B cell (primary cell): ENCODE measurements at regions of chr2 and their contacts with region 1.

Region 1: DNA sequence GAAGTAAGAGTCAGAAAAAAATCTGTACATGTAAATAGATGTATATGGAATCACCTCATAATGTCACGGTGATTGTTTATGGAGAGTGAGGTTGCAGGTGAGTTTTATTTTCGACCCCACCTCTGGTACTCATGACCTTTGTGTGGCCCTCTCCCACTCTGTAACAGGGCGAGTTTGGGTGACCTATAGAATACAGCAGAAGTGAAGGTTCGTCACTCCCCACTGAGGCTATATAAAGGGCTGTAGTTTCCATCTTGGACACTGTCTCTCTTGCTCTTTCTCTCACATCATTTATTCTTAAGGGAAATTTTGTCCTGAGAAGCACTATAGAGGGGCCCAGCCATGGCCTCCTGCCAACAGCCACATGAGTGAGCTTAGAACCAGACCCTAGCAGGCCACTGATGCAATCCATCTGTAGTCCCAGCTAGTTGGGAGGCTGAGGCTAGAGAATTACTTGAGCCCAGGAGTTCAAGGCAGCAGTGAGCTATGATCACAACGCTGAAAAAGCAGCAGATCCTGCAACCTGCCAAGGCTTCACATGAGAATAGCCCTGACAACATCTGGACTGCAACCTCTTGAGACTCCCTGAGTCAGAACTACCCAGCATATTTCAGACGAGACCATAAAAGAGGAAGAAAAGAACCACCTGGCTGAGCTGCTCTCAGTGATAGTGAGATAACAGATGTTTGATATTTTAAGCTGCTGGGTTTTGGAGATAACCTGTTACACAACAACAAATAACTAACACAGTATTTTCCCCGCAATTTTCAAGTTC is 74.3 kb upstream of the SLC1A4 start:
- DNase-seq: peak; percentile 80
- ATAC-seq: peak; percentile 79
- H3K4me3 ChIP-seq: no peak overlapping the region
- H3K4me3 Mint-ChIP-seq: peak overlapping the region; percentile 62
- H3K27ac ChIP-seq: peak overlapping the region in 1 of 2 donors; percentile 58
- H3K27ac Mint-ChIP-seq: peak overlapping the region; percentile 66
- H3K4me1 ChIP-seq: peaks cover 57 to 68% of the 10 kb centered on the region in 2 donors
- H3K4me1 Mint-ChIP-seq: peaks cover 59% of the 10 kb centered on the region
- H3K27me3 ChIP-seq: no peaks in the 10 kb centered on the region
- H3K27me3 Mint-ChIP-seq: no peaks in the 10 kb centered on the region
- CTCF ChIP-seq: no peak

Region 2: DNA sequence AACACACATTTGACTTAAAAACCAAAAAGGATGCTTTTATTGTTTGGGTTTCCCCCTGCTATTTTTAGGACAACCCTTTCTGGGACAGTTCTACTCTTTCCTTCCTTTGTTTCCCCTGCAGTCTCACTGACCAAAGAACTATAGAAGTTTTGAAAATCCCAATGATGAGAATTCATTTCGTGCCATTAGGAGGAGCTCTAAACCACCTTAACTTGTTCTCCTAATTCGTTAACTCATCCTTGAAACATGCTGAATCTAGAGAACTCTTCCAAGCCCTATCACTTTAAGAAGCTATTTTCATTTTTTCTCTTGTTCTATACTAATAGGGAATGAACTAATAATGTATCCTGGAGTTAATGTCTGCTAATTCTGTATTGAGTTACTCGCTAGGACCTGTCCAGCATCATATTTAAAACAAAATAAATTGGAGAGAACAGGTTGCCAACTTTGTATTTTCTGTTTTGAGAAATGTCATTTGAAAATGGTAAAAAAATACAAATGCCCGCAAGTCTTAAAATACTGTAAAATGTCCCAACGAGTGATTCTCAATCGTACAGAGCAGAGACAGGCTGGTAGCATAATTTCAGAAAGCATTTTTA is 327.9 kb before region 1 on chr2:
- CTCF ChIA-PET with region 1: interaction called, 10 read pairs
- POLR2A ChIA-PET with region 1: no interaction called
- intact Hi-C with region 1: no loop called
- DNase-seq: peak; percentile 72
- ATAC-seq: peak; percentile 58
- H3K4me3 ChIP-seq: no peak overlapping the region
- H3K4me3 Mint-ChIP-seq: no peak overlapping the region
- H3K27ac ChIP-seq: no peak overlapping the region
- H3K27ac Mint-ChIP-seq: peak overlapping the region; percentile 32
- H3K4me1 ChIP-seq: peaks cover 0 to 4% of the 10 kb centered on the region in 2 donors
- H3K4me1 Mint-ChIP-seq: peaks cover 14% of the 10 kb centered on the region
- H3K27me3 ChIP-seq: no peaks in the 10 kb centered on the region
- H3K27me3 Mint-ChIP-seq: no peaks in the 10 kb centered on the region
- CTCF ChIP-seq: peak; percentile 88

Region 3: DNA sequence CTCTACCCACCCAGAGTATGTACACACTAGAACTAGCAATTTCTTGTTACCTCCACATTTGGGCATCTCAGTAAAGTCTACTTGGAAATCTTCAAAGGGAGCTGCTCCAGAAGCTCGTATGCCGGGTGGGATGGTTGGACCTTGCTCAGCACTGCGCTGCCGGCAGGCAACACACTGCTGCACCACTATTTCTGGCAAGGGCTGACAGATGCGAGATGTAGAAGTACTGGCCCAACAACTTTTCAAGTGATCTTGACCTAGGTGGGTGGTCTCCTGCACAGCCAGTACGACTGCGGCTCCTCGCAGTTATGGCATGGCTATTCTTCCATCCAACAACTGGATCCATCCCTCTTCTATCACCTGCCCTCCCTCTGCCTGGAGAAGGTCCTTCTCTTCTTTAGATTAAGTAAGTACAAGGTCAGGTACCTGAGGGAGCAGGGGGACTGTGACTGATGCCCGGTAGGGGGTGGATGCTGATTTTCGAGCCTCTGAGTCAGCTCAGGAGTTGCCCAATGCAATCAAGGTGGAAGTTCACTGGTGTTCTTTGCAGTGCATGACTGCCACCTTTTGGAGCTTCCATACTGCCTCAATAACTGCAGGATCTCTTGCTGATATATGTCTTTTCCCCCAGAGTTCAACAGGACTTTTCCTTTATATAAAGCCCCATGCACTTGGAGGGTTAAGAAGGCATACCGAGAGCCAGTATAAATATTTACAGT is 26.2 kb before region 1 on chr2:
- CTCF ChIA-PET with region 1: no interaction called
- POLR2A ChIA-PET with region 1: no interaction called
- intact Hi-C with region 1: no loop called
- DNase-seq: no peak
- ATAC-seq: no peak
- H3K4me3 ChIP-seq: no peak overlapping the region
- H3K4me3 Mint-ChIP-seq: no peak overlapping the region
- H3K27ac ChIP-seq: no peak overlapping the region
- H3K27ac Mint-ChIP-seq: no peak overlapping the region
- H3K4me1 ChIP-seq: no peaks in the 10 kb centered on the region
- H3K4me1 Mint-ChIP-seq: no peaks in the 10 kb centered on the region
- H3K27me3 ChIP-seq: no peaks in the 10 kb centered on the region
- H3K27me3 Mint-ChIP-seq: no peaks in the 10 kb centered on the region
- CTCF ChIP-seq: no peak

Region 4: GRCh38 chr2:64937687-64938491 is 23.0 kb after region 1 on chr2:
- CTCF ChIA-PET with region 1: interaction called, 70 read pairs
- POLR2A ChIA-PET with region 1: interaction called, 12 read pairs
- intact Hi-C with region 1: no loop called
- DNase-seq: peak; percentile 68
- ATAC-seq: peak; percentile 77
- H3K4me3 ChIP-seq: peak overlapping the region in 4 of 5 experiments; percentile 9 to 53 (median 34)
- H3K4me3 Mint-ChIP-seq: peak overlapping the region; percentile 72
- H3K27ac ChIP-seq: peak overlapping the region; percentile 84 to 87
- H3K27ac Mint-ChIP-seq: peak overlapping the region; percentile 95
- H3K4me1 ChIP-seq: peaks cover 71 to 72% of the 10 kb centered on the region in 2 donors
- H3K4me1 Mint-ChIP-seq: peaks cover 84% of the 10 kb centered on the region
- H3K27me3 ChIP-seq: no peaks in the 10 kb centered on the region
- H3K27me3 Mint-ChIP-seq: no peaks in the 10 kb centered on the region
- CTCF ChIP-seq: no peak

Region 5: GRCh38 chr2:64988420-64989125 is 73.7 kb after region 1 on chr2:
- CTCF ChIA-PET with region 1: interaction called, 125 read pairs
- POLR2A ChIA-PET with region 1: interaction called, 4 read pairs
- intact Hi-C with region 1: loop called (anchors 1 kb)
- DNase-seq: peak; percentile 75
- ATAC-seq: peak; percentile 33
- H3K4me3 ChIP-seq: peak overlapping the region; percentile 53 to 87 (median 81)
- H3K4me3 Mint-ChIP-seq: peak overlapping the region; percentile 92
- H3K27ac ChIP-seq: peak overlapping the region in 1 of 2 donors; percentile 53
- H3K27ac Mint-ChIP-seq: peak overlapping the region; percentile 84
- H3K4me1 ChIP-seq: peaks cover 17 to 24% of the 10 kb centered on the region in 2 donors
- H3K4me1 Mint-ChIP-seq: peaks cover 37% of the 10 kb centered on the region
- H3K27me3 ChIP-seq: no peaks in the 10 kb centered on the region
- H3K27me3 Mint-ChIP-seq: no peaks in the 10 kb centered on the region
- CTCF ChIP-seq: peak; percentile 48

Region 6: DNA sequence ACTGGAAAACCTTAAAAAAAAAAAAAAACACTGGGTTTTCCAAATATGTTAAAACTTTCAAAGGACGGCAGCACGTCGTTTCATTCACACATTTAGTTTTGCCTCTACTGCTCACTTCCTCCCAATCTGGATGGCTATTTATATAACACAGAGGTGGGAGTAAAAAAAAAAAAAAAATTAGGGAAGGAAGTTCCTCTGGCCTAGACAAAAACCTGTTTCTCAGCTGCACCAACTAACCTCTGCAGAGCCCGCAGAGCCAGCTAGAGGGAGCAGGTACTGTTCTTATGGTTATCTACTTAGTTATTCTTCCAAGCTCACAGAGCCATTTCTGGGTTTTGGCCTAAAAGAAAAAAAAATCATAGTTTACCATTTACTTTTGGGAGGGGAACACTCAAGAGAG is 102.4 kb after region 1 on chr2:
- CTCF ChIA-PET with region 1: interaction called, 54 read pairs
- POLR2A ChIA-PET with region 1: no interaction called
- intact Hi-C with region 1: loop called (anchors 1 kb)
- DNase-seq: peak; percentile 73
- ATAC-seq: peak; percentile 82
- H3K4me3 ChIP-seq: no peak overlapping the region
- H3K4me3 Mint-ChIP-seq: peak overlapping the region; percentile 55
- H3K27ac ChIP-seq: no peak overlapping the region
- H3K27ac Mint-ChIP-seq: peak overlapping the region; percentile 72
- H3K4me1 ChIP-seq: peaks cover 29 to 35% of the 10 kb centered on the region in 2 donors
- H3K4me1 Mint-ChIP-seq: peaks cover 48% of the 10 kb centered on the region
- H3K27me3 ChIP-seq: no peaks in the 10 kb centered on the region
- H3K27me3 Mint-ChIP-seq: no peaks in the 10 kb centered on the region
- CTCF ChIP-seq: peak; percentile 69

Region 7: DNA sequence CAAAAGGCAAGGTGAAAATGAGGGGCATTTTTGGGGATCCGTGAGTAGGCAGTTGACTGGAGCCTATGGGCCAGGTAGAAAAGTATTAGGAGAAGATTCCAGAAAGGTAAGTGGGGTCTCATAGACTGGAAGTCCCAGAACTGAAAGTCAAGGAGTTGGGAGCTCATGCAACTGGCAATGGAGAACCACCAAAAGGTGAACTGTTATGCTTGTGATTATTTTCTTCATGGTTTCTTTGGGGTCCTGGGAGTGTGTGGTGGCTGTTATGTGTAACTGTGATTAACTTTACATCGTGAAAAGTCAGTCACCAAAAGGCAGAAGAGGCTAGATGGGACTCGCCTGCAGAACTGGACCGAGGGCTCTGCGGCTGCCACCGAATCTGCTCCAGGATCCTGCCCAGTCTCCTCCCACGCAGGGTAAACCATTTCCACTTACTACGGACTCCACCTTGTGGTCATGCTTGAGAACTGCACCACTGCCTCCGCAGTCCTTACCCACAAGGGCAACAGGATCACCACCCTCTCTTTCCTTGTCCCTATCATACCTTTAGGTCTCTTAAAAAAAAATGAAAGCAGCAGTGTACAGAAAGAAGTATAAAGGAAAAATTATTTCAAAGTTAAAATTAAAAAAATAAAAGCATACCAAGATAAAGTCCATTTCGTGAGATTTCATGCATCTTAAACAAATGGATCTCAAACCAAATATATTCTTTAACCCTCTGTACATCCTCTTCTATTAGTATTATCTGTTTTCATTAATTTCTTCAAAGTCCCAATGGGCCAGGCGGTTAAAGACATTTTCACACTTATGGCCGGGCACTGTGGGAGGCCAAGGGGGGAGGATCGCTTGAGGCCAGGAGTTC is 125.7 kb after region 1 on chr2:
- CTCF ChIA-PET with region 1: interaction called, 360 read pairs
- POLR2A ChIA-PET with region 1: interaction called, 11 read pairs
- intact Hi-C with region 1: loop called (anchors 1 kb)
- DNase-seq: peak; percentile 86
- ATAC-seq: peak; percentile 99
- H3K4me3 ChIP-seq: no peak overlapping the region
- H3K4me3 Mint-ChIP-seq: no peak overlapping the region
- H3K27ac ChIP-seq: no peak overlapping the region
- H3K27ac Mint-ChIP-seq: peak overlapping the region; percentile 42
- H3K4me1 ChIP-seq: peaks cover 5% of the 10 kb centered on the region in 2 donors
- H3K4me1 Mint-ChIP-seq: peaks cover 18% of the 10 kb centered on the region
- H3K27me3 ChIP-seq: no peaks in the 10 kb centered on the region
- H3K27me3 Mint-ChIP-seq: no peaks in the 10 kb centered on the region
- CTCF ChIP-seq: peak; percentile 96

Region 8: DNA sequence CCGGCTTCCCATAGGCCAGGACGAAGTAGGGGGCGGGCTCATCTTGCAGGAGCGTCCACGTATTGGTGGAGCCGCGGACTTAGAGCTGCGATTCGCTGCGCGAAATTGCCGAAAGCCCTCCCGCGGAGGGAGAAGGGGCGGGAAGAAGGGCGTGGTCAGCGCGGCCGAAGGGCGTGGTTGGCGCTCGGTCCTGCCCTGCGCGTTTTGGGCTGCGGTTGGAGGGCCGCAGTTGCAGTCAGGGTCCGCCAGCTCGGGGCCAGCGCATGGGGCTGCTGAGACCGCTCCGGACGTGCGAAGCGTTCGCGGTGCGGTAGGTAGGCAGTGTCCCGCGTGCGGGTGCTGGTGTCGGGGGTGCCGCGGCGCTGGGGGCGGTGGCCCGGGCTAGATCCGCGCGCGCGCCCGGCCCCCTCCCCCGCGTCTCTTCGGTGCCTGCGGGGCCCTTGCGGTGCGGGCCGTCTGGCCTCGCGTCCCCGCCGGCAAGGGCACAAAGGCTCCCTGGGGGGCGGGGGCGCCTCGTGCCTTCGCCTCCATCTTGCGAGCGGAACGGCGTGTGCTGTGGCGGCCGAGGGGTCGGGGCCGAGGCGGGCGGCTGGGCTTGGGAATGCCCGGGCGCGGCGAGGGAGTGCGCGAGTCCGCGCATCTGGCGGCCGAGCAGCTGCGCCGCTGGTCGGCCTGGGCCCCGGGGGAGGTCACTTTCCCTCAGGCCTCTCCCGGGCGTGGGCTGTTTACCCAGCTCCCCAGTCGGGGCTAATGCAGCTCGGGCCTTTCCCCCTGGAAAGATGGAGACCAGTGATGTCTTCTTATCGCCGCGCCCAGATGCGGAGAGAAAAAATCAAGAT is 141.5 kb after region 1 on chr2 and contains the start of gene CEP68:
- CTCF ChIA-PET with region 1: interaction called, 45 read pairs
- POLR2A ChIA-PET with region 1: interaction called, 7 read pairs
- intact Hi-C with region 1: no loop called
- DNase-seq: peak; percentile 98
- ATAC-seq: peak; percentile 92
- H3K4me3 ChIP-seq: peak within 1 kb of the TSS; percentile 76 to 81 (median 80)
- H3K4me3 Mint-ChIP-seq: peak within 1 kb of the TSS; percentile 100
- H3K27ac ChIP-seq: peak within 1 kb of the TSS; percentile 78 to 88
- H3K27ac Mint-ChIP-seq: peak within 1 kb of the TSS; percentile 99
- H3K4me1 ChIP-seq: peaks cover 47 to 48% of the 10 kb centered on the region in 2 donors
- H3K4me1 Mint-ChIP-seq: peaks cover 65% of the 10 kb centered on the region
- H3K27me3 ChIP-seq: no peaks in the 10 kb centered on the region
- H3K27me3 Mint-ChIP-seq: no peaks in the 10 kb centered on the region
- CTCF ChIP-seq: no peak
- total RNA-seq, gene CEP68: 31.8 and 32.0 TPM in 2 replicates